ENCODE measurements at regions of chr15 and their contacts with region 1.

Region 1: GRCh38 chr15:57505949-57506391 is 85.7 kb upstream of the MYZAP start:
- DNase-seq: no peak
- H3K4me3 ChIP-seq: no peak overlapping the region
- CTCF ChIP-seq: no peak

Region 2: DNA sequence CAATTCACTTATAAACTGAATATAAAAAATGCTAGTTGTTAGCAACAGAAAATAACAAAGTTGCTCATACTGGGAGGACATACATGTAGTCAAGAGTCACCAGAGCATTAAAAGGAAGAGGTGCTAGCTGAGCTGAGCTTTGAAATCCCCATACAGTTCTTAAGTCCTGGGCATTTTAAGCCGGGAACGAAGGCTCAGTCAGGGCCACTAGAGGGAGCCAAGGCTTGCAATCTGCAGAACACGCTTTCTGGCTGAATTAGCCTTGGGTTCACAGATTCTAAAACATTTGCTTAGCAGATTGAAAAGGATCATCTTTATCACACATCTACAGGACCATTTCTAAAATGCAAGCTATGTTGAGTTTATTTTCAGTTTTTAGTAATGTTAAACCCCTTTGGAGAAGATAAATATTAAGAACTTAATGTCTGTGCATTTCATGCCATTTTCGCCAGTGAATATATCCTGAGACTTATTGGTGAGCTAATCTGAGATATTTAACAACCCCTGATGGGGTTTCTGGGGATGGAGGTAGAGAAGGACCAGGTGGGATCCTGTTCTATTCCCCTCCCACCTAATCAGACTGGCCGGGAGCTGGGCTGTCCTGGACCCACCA is 1014.8 kb before region 1 on chr15:
- in situ Hi-C with region 1: loop called (anchors 25 kb)
- DNase-seq: peak; percentile 74
- H3K4me3 ChIP-seq: no peak overlapping the region
- CTCF ChIP-seq: peak; percentile 99

Region 3: GRCh38 chr15:57146506-57147201 is 359.3 kb before region 1 on chr15:
- in situ Hi-C with region 1: loop called (anchors 25 kb)
- DNase-seq: peak; percentile 66
- H3K4me3 ChIP-seq: no peak overlapping the region
- CTCF ChIP-seq: peak; percentile 47

Region 4: GRCh38 chr15:57340682-57341259 is 165.2 kb before region 1 on chr15:
- in situ Hi-C with region 1: loop called (anchors 10 kb)
- DNase-seq: peak; percentile 44
- H3K4me3 ChIP-seq: no peak overlapping the region
- CTCF ChIP-seq: peak; percentile 72

Region 5: DNA sequence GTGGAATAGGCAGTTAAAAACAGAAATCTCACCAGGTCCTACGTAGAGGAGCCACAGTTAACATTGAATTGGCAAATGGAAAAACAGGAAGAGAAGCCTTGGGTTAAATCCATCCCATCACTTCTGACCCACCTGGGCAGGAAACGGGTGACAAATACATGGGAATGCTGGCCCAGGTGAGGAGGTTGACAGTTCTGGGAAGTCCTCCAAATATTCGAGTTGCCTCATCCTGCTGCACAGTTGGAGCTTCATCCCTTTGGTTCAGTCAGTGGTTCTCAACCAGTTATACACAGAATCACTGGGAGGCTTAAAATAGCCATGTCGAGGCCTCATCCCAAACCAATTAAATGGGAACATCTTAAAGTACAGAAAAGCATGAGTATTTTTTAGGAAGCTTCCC is 91.0 kb after region 1 on chr15:
- in situ Hi-C with region 1: no loop called
- DNase-seq: no peak
- H3K4me3 ChIP-seq: no peak overlapping the region
- CTCF ChIP-seq: no peak